ENCODE measurements at regions of chr5 and their contacts with region 1.

Region 1: DNA sequence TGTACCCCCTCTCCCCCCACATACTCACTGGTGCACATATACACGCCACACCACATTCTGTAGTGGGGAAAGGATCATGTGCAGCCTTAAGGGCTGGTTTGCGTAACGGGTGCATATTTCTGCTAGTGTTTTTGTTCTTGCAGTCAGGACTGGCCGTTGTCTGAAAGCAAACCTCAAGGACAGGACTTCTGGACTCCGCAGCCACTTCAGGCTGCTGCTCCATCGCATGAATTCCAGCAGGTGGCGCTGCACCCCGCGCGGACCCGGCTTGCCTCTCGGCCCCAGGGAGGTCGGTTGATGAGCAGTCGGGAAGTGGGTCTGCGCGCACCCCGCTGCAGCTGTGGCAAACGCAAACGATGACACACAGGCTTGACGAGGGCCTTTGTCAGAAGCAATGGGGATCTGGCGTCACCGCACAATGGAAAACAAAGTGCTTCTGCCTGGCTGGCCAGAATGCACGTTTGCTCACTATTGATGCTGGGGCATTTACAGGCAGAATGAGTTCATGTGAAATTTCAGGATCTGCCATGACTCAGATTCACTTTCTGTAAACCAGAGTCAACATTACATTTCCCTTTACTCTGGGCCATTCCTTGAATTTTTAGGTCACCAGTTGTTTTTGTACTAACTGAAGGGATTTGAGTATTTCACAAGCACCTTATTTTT is 36.3 kb upstream of the GLRX start:
- DNase-seq: peak; percentile 80
- H3K4me3 ChIP-seq: peak overlapping the region; percentile 7 to 14
- H3K27ac ChIP-seq: peak overlapping the region; percentile 75 to 78
- H3K4me1 ChIP-seq: peaks cover 3% of the 10 kb centered on the region
- H3K27me3 ChIP-seq: no peaks in the 10 kb centered on the region
- CTCF ChIP-seq: peak; percentile 92 to 99 (median 98)
- POLR2A ChIP-seq: peak; percentile 36

Region 2: GRCh38 chr5:95961617-95962474 is 103.1 kb after region 1 on chr5 and contains the start of gene ELL2:
- intact Hi-C with region 1: loop called (anchors 5 kb)
- DNase-seq: peak; percentile 99
- H3K4me3 ChIP-seq: peak within 1 kb of the TSS; percentile 96 to 100
- H3K27ac ChIP-seq: peak within 1 kb of the TSS; percentile 97 to 99
- H3K4me1 ChIP-seq: no peaks in the 10 kb centered on the region
- H3K27me3 ChIP-seq: no peaks in the 10 kb centered on the region
- CTCF ChIP-seq: no peak
- POLR2A ChIP-seq: peak; percentile 93
- total RNA-seq, gene ELL2: 80.0 to 104 TPM

Region 3: DNA sequence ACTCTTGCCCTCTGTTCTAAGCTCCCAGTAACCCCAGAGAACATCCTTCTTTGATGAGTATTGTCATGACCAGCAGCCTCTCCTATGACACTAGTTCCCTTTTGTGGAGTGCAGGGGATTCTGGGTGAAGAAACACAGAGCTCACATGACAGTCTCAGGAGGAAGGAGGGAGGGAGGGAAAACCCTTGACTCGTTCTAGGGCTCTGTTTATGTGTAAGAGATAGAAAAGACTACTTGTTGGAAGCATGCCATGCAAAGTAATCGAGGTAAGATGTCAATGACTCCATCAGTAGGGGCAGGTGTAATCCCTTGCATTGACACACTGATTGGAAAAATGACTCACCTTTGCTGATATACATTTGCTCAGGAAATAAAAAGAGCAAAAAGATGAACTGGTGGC is 293.1 kb after region 1 on chr5:
- intact Hi-C with region 1: no loop called
- DNase-seq: no peak
- H3K4me3 ChIP-seq: no peak overlapping the region
- H3K27ac ChIP-seq: no peak overlapping the region
- H3K4me1 ChIP-seq: no peaks in the 10 kb centered on the region
- H3K27me3 ChIP-seq: no peaks in the 10 kb centered on the region
- CTCF ChIP-seq: no peak
- POLR2A ChIP-seq: no peak

Region 4: GRCh38 chr5:96336351-96336985 is 477.7 kb after region 1 on chr5:
- intact Hi-C with region 1: loop called (anchors 2 kb)
- DNase-seq: peak; percentile 85
- H3K4me3 ChIP-seq: no peak overlapping the region
- H3K27ac ChIP-seq: peak overlapping the region; percentile 54 to 73
- H3K4me1 ChIP-seq: peaks cover 27% of the 10 kb centered on the region
- H3K27me3 ChIP-seq: no peaks in the 10 kb centered on the region
- CTCF ChIP-seq: peak; percentile 75 to 95 (median 90)
- POLR2A ChIP-seq: no peak

Measured in prostate gland (tissue), 2 donors.